Activated B cell treated with CpG ODN at 0.5 μM for 24 hours (primary cell): ENCODE measurements at regions of chrX and their contacts with region 1.

Region 1: GRCh38 chrX:8743126-8743732 is 11.3 kb upstream of the ANOS1 start:
- DNase-seq: peak; percentile 27
- ATAC-seq: no peak
- H3K4me3 Mint-ChIP-seq: no peak overlapping the region
- H3K27ac Mint-ChIP-seq: no peak overlapping the region
- H3K4me1 Mint-ChIP-seq: no peaks in the 10 kb centered on the region
- H3K27me3 Mint-ChIP-seq: no peaks in the 10 kb centered on the region
- CTCF ChIP-seq: no peak

Region 2: GRCh38 chrX:7996414-7996813 is 746.8 kb before region 1 on chrX:
- CTCF ChIA-PET with region 1: interaction called, 3 read pairs
- POLR2A ChIA-PET with region 1: no interaction called
- intact Hi-C with region 1: loop called (anchors 1 kb)
- DNase-seq: no peak
- ATAC-seq: peak; percentile 34
- H3K4me3 Mint-ChIP-seq: no peak overlapping the region
- H3K27ac Mint-ChIP-seq: no peak overlapping the region
- H3K4me1 Mint-ChIP-seq: no peaks in the 10 kb centered on the region
- H3K27me3 Mint-ChIP-seq: no peaks in the 10 kb centered on the region
- CTCF ChIP-seq: no peak

Region 3: DNA sequence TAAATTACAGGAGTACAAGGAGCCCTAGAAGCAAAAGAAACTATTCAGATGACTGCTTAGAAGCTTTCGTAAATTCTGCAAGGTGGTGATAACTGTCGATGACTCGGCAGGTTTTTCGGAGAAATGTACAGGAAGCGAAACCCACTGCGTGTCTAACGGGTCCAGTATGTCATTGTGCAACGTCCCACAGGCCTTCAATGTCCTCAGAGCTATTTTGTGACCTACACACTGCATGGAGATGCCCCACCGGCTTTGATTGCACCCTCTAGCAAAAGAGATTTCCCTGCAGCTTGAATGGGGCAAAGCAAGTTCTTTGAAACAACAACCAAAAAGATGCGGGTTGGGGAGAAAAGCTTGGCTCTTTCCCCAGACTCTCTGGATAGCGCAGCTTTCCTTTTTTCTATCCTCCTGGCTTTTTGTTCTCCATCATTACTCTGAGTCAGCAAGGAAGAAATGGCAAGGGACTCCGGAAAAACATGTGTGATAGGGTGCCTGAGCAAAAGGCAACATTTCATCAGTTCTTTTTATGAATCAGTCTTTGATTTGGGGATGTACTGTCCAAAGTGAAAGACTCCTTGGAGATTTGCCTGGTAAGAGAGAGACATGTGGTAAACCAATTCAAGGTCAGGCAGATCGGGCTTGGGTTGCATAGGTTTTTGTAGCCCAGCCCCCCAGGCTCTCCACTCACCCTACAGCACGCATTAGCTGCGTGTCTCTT is 609.6 kb after region 1 on chrX:
- CTCF ChIA-PET with region 1: no interaction called
- POLR2A ChIA-PET with region 1: no interaction called
- intact Hi-C with region 1: loop called (anchors 10 kb)
- DNase-seq: no peak
- ATAC-seq: peak; percentile 71
- H3K4me3 Mint-ChIP-seq: peak overlapping the region; percentile 70
- H3K27ac Mint-ChIP-seq: peak overlapping the region; percentile 80
- H3K4me1 Mint-ChIP-seq: peaks cover 27% of the 10 kb centered on the region
- H3K27me3 Mint-ChIP-seq: no peaks in the 10 kb centered on the region
- CTCF ChIP-seq: no peak

Region 4: DNA sequence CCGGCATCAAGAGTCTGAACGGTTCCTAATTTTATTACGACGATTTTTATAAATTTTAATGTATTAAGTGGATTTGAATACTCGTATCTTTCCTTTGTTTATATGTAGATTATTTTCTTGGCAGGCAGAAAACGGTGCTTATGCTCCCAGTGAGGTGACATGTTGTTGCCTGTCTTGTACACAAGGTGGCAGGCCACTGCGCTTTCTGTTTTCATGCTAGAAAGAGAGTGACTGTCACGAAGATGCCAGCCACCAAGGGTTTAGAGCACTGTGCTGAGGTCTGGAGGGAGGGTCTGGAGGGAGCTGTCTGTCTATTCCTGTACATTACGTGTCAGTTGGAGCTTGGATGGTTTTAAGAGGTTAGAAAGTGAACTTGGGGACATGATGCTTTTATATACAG is 1130.7 kb after region 1 on chrX:
- CTCF ChIA-PET with region 1: no interaction called
- POLR2A ChIA-PET with region 1: no interaction called
- intact Hi-C with region 1: loop called (anchors 10 kb)
- DNase-seq: peak; percentile 16
- ATAC-seq: peak; percentile 72
- H3K4me3 Mint-ChIP-seq: no peak overlapping the region
- H3K27ac Mint-ChIP-seq: no peak overlapping the region
- H3K4me1 Mint-ChIP-seq: peaks cover 2% of the 10 kb centered on the region
- H3K27me3 Mint-ChIP-seq: peaks cover 9% of the 10 kb centered on the region
- CTCF ChIP-seq: no peak

Region 5: DNA sequence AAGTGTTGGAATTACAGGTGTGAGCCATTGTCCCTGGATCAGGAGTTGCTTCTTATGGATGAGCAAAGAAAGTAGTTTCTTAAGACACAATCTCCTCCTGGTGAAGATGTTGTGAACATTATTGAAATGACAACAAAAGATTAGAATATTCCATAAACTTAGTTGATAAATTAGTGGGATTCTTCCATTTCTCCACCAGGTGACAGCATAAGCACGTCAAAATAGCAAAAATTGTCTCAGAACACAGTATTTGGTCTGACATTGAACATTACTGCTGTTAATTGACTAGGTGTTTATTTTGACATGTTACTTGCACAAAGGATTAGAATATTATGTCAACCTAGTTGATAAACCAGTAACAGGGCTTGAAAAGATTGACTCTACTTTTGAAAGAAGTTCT is 1245.5 kb after region 1 on chrX:
- CTCF ChIA-PET with region 1: no interaction called
- POLR2A ChIA-PET with region 1: no interaction called
- intact Hi-C with region 1: loop called (anchors 10 kb)
- DNase-seq: no peak
- ATAC-seq: no peak
- H3K4me3 Mint-ChIP-seq: no peak overlapping the region
- H3K27ac Mint-ChIP-seq: no peak overlapping the region
- H3K4me1 Mint-ChIP-seq: peaks cover 17% of the 10 kb centered on the region
- H3K27me3 Mint-ChIP-seq: no peaks in the 10 kb centered on the region
- CTCF ChIP-seq: no peak

Region 6: DNA sequence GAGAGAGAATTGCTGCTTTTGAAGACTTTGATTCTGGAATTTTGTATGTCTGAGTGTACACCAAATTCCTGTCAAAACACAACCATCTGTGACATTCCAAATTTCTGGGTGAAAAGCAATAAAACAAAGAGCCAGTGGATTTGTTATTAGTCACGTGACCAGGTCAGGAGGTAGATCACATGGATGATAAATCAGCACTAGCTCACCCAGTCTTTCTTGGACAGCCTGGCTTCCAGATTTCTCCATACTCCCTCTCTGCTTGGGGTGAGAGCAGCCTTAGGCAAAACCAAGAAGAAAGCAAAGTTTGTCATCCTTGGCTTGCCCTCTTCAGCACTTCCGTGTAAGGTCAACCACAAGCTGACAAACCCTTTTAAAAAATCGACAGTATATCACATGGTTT is 1607.8 kb after region 1 on chrX:
- CTCF ChIA-PET with region 1: no interaction called
- POLR2A ChIA-PET with region 1: no interaction called
- intact Hi-C with region 1: no loop called
- DNase-seq: no peak
- ATAC-seq: no peak
- H3K4me3 Mint-ChIP-seq: no peak overlapping the region
- H3K27ac Mint-ChIP-seq: no peak overlapping the region
- H3K4me1 Mint-ChIP-seq: no peaks in the 10 kb centered on the region
- H3K27me3 Mint-ChIP-seq: peaks cover 6% of the 10 kb centered on the region
- CTCF ChIP-seq: no peak